WTC11 (cell line): ENCODE measurements at regions of chr12 and their contacts with region 1.

Region 1: DNA sequence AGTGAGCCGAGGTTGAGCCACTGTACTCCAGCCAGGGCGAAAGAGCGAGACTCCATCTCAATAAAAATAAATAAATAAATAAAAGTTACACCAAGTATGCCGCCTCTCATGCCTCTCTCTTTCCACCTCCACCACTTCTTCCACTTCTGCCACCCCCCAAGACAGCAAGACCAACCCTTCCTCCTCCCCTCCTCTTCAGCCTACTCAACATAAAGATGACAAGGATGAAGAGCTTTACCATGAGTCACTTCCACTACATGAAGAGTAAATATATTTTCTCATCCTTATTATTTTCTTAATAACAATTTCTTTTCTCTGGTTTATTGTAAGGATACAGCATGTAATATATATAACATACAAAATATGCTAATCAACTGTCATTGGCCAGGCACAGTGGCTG is 3.6 kb upstream of the TMED2 start:
- DNase-seq: no peak
- ATAC-seq: no peak
- H3K4me3 Mint-ChIP-seq: no peak overlapping the region
- H3K27ac Mint-ChIP-seq: no peak overlapping the region
- H3K4me1 Mint-ChIP-seq: peaks cover 15% of the 10 kb centered on the region
- H3K27me3 Mint-ChIP-seq: no peaks in the 10 kb centered on the region
- CTCF ChIP-seq: no peak

Region 2: GRCh38 chr12:123482876-123483275 is 97.9 kb before region 1 on chr12:
- CTCF ChIA-PET with region 1: no interaction called
- POLR2A ChIA-PET with region 1: no interaction called
- DNase-seq: no peak
- ATAC-seq: no peak
- H3K4me3 Mint-ChIP-seq: no peak overlapping the region
- H3K27ac Mint-ChIP-seq: no peak overlapping the region
- H3K4me1 Mint-ChIP-seq: no peaks in the 10 kb centered on the region
- H3K27me3 Mint-ChIP-seq: no peaks in the 10 kb centered on the region; the same call in 1 of the 2 replicates
- CTCF ChIP-seq: no peak

Region 3: GRCh38 chr12:123494124-123494851 is 86.5 kb before region 1 on chr12:
- CTCF ChIA-PET with region 1: interaction called, 11 read pairs
- POLR2A ChIA-PET with region 1: interaction called, 3 read pairs
- DNase-seq: no peak
- ATAC-seq: peak; percentile 46; the same call in 1 of the 2 replicates
- H3K4me3 Mint-ChIP-seq: no peak overlapping the region
- H3K27ac Mint-ChIP-seq: peak overlapping the region; percentile 68
- H3K4me1 Mint-ChIP-seq: no peaks in the 10 kb centered on the region; the same call in 1 of the 2 replicates
- H3K27me3 Mint-ChIP-seq: no peaks in the 10 kb centered on the region
- CTCF ChIP-seq: no peak

Region 4: GRCh38 chr12:123540899-123541662 is 39.7 kb before region 1 on chr12:
- CTCF ChIA-PET with region 1: interaction called, 17 read pairs
- POLR2A ChIA-PET with region 1: interaction called, 3 read pairs
- DNase-seq: no peak
- ATAC-seq: no peak
- H3K4me3 Mint-ChIP-seq: no peak overlapping the region
- H3K27ac Mint-ChIP-seq: no peak overlapping the region
- H3K4me1 Mint-ChIP-seq: no peaks in the 10 kb centered on the region
- H3K27me3 Mint-ChIP-seq: peaks cover 22% of the 10 kb centered on the region
- CTCF ChIP-seq: no peak

Region 5: GRCh38 chr12:123559468-123559867 is 21.3 kb before region 1 on chr12:
- CTCF ChIA-PET with region 1: no interaction called
- POLR2A ChIA-PET with region 1: no interaction called
- DNase-seq: no peak
- ATAC-seq: no peak
- H3K4me3 Mint-ChIP-seq: no peak overlapping the region
- H3K27ac Mint-ChIP-seq: no peak overlapping the region
- H3K4me1 Mint-ChIP-seq: no peaks in the 10 kb centered on the region
- H3K27me3 Mint-ChIP-seq: no peaks in the 10 kb centered on the region; the same call in 1 of the 2 replicates
- CTCF ChIP-seq: no peak

Region 6: DNA sequence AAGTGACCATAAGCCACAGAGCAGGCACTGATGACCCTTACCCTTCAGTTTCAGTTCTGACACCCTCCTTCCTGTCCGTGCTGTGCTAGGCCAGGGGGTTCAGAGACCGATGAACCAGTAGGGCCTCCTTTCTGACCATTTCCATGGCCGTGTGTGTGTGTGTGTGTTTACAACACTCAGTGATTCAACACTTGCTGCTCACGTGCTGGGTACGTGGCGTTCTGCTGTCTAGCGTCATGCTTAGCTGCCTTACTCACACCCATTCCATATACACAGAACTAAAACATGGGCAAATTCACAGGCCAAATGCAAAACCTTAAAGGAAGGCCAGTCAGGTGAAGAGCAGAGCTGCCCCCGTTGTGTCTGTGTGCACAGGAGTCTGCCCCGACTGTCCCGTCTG is 248.8 kb after region 1 on chr12:
- CTCF ChIA-PET with region 1: no interaction called
- POLR2A ChIA-PET with region 1: no interaction called
- DNase-seq: no peak
- ATAC-seq: no peak
- H3K4me3 Mint-ChIP-seq: no peak overlapping the region
- H3K27ac Mint-ChIP-seq: no peak overlapping the region
- H3K4me1 Mint-ChIP-seq: no peaks in the 10 kb centered on the region
- H3K27me3 Mint-ChIP-seq: peaks cover 24% of the 10 kb centered on the region
- CTCF ChIP-seq: no peak

Region 7: DNA sequence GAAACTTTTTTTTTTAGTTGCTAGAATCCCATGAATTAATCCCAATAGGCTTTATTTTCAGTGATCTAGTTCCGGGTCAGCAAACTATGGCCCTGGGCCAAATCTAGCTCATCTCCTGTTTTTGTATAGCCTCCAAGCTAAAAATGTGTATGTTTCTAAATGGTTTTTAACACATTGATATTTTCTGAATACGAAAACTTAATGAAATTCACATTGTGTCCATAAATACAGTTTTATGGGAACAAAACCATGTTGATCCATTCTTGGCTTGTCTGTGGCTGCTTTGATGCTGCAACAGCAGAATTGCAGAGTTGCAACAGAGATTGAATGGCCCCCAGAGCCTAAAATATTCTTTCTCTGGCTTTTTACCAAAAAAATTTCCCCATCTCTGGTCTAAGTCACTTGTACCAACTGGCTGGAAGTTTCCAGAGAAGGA is 439.8 kb after region 1 on chr12:
- CTCF ChIA-PET with region 1: no interaction called
- POLR2A ChIA-PET with region 1: no interaction called
- DNase-seq: no peak
- ATAC-seq: no peak
- H3K4me3 Mint-ChIP-seq: no peak overlapping the region
- H3K27ac Mint-ChIP-seq: no peak overlapping the region
- H3K4me1 Mint-ChIP-seq: peaks cover 5% of the 10 kb centered on the region
- H3K27me3 Mint-ChIP-seq: no peaks in the 10 kb centered on the region; the same call in 1 of the 2 replicates
- CTCF ChIP-seq: no peak